Breast epithelium (tissue), 4 donors: ENCODE measurements at regions of chr5 and their contacts with region 1.

Region 1: GRCh38 chr5:73437101-73437776 is 11.3 kb downstream of the FOXD1 start:
- DNase-seq: no peak
- H3K4me3 ChIP-seq: peak overlapping the region in 2 of 3 donors; percentile 30 to 59
- H3K27ac ChIP-seq: no peak overlapping the region
- H3K4me1 ChIP-seq: peaks cover 7 to 8% of the 10 kb centered on the region in 2 donors
- H3K27me3 ChIP-seq: peaks cover 13 to 98% of the 10 kb centered on the region in 2 donors
- CTCF ChIP-seq: no peak
- POLR2A ChIP-seq: no peak

Region 2: GRCh38 chr5:71821029-71821428 is 1616.2 kb before region 1 on chr5:
- intact Hi-C with region 1: loop called (anchors 5 kb)
- DNase-seq: no peak
- H3K4me3 ChIP-seq: no peak overlapping the region
- H3K27ac ChIP-seq: no peak overlapping the region
- H3K4me1 ChIP-seq: no peaks in the 10 kb centered on the region
- H3K27me3 ChIP-seq: no peaks in the 10 kb centered on the region
- CTCF ChIP-seq: no peak
- POLR2A ChIP-seq: no peak

Region 3: GRCh38 chr5:72336781-72337553 is 1100.3 kb before region 1 on chr5:
- intact Hi-C with region 1: no loop called
- DNase-seq: no peak
- H3K4me3 ChIP-seq: no peak overlapping the region
- H3K27ac ChIP-seq: no peak overlapping the region
- H3K4me1 ChIP-seq: no peaks in the 10 kb centered on the region
- H3K27me3 ChIP-seq: no peaks in the 10 kb centered on the region
- CTCF ChIP-seq: no peak
- POLR2A ChIP-seq: no peak

Region 4: DNA sequence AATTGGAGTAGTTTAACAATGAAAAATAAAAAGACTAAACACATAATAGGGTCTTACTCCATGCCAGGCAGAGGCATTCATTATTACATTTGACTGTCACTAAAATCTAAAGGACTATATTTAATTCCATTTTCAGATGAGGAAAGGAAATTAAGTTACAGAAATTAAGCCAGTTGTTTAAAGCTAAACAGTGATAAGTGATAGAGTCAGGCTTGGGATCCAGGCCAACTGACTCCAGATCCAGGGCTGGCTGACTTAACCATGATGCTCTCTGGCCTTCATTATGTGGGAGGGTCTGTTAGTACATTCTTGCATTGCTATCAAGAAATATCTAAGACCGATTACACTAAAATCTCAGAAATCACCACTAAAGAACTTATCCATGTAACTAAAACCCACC is 296.0 kb after region 1 on chr5:
- intact Hi-C with region 1: no loop called
- DNase-seq: no peak
- H3K4me3 ChIP-seq: no peak overlapping the region
- H3K27ac ChIP-seq: no peak overlapping the region
- H3K4me1 ChIP-seq: no peaks in the 10 kb centered on the region
- H3K27me3 ChIP-seq: no peaks in the 10 kb centered on the region
- CTCF ChIP-seq: no peak
- POLR2A ChIP-seq: no peak

Region 5: GRCh38 chr5:75023368-75024159 is 1586.3 kb after region 1 on chr5:
- intact Hi-C with region 1: loop called (anchors 5 kb)
- DNase-seq: no peak
- H3K4me3 ChIP-seq: no peak overlapping the region
- H3K27ac ChIP-seq: no peak overlapping the region
- H3K4me1 ChIP-seq: no peaks in the 10 kb centered on the region
- H3K27me3 ChIP-seq: no peaks in the 10 kb centered on the region
- CTCF ChIP-seq: no peak
- POLR2A ChIP-seq: no peak